ENCODE measurements at regions of chr15 and their contacts with region 1.

Region 1: GRCh38 chr15:58933281-58934113 is at the start of gene SLTM:
- DNase-seq: peak; percentile 98
- H3K4me3 ChIP-seq: peak within 1 kb of the TSS; percentile 56 to 94 (median 70)
- H3K27ac ChIP-seq: peak within 1 kb of the TSS; percentile 96 to 100 (median 100)
- H3K4me1 ChIP-seq: peaks cover 5 to 52% (median 36%) of the 10 kb centered on the region in 6 donors
- H3K27me3 ChIP-seq: no peaks in the 10 kb centered on the region
- CTCF ChIP-seq: peak in 8 of 11 experiments; percentile 29 to 62 (median 48)
- POLR2A ChIP-seq: peak; percentile 42 to 93 (median 87)
- total RNA-seq, gene SLTM: 95.4 to 176 (median 119) TPM

Region 2: DNA sequence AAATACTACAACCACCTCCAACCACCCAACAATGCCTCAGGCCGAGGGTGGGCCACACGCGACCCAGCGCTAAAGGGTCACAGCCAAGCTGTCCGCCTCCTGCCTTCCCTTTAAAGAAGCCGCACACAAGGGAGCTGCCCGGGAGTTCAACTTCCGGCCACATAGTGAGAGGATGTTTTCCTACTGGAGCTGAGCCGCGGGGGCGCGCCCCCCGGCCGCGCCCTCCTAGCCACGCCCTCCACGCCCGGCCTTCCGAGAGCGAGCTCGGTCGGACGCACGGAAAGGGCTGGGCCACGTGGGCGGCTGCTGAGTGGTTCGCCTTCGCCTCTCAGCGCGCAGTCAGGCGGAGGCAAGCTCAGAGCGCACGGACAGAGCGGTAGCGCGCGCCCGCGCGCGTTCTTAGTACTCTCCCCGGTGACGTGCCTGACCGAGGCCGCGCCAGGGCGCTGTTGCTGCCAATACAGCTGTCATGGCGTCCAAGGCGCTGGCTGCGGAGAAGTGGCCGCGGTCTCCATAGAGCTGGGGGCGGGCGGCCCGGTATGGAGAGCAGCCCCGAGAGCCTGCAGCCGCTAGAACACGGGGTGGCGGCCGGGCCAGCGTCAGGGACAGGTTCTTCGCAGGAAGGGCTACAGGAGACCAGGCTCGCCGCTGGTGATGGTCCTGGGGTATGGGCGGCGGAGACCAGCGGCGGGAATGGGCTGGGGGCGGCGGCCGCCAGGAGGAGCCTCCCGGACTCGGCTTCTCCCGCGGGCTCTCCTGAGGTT is 162.5 kb before region 1 on chr15 and contains the start of gene MINDY2:
- intact Hi-C with region 1: loop called (anchors 10 kb)
- DNase-seq: peak; percentile 100
- H3K4me3 ChIP-seq: peak within 1 kb of the TSS; percentile 75 to 99 (median 86)
- H3K27ac ChIP-seq: peak within 1 kb of the TSS; percentile 92 to 99 (median 98)
- H3K4me1 ChIP-seq: peaks cover 33 to 56% (median 48%) of the 10 kb centered on the region in 6 donors
- H3K27me3 ChIP-seq: no peaks in the 10 kb centered on the region
- CTCF ChIP-seq: peak in 9 of 11 experiments; percentile 26 to 70 (median 61)
- POLR2A ChIP-seq: peak in 2 of 3 donors; percentile 77 to 89
- total RNA-seq, gene MINDY2: 14.1 to 24.0 (median 20.1) TPM

Region 3: DNA sequence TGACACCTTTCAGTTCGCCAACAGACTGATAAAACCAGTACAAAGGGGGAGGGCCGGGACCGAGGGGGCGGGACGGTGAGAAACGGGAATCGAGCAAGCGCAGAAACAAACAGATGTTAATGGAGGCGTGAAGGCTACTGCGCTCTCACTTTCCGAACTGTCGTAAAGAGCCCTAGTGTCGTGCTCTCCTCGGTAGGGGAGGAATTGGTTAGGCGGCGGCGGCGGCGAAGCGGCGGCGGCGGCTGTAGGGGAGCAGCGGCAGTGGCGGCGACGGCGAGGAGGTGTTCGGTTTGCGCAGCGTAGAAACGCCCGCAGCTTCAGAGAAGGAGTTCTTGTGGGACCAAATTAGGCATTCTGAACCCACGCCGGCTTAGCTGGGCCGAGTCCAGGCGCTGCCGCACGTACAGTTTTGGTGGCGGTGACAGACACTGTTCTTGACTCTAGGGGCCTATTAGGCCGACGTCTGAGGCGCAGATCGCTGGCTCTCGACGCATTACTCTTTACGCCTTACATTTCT is 54.0 kb after region 1 on chr15 and contains the start of gene RNF111:
- intact Hi-C with region 1: no loop called
- DNase-seq: peak; percentile 96
- H3K4me3 ChIP-seq: peak within 1 kb of the TSS; percentile 78 to 95 (median 90)
- H3K27ac ChIP-seq: peak within 1 kb of the TSS; percentile 83 to 98 (median 96)
- H3K4me1 ChIP-seq: peaks cover 20 to 61% (median 35%) of the 10 kb centered on the region in 6 donors
- H3K27me3 ChIP-seq: no peaks in the 10 kb centered on the region
- CTCF ChIP-seq: peak in 2 of 11 experiments; percentile 22 to 26
- POLR2A ChIP-seq: peak; percentile 6 to 63 (median 48)
- total RNA-seq, gene RNF111: 33.6 to 68.2 (median 51.7) TPM